Activated CD4-positive, alpha-beta memory T cell treated with anti-CD3 and anti-CD28 coated beads, Interleukin-2, amount 10 ng/mL, durations not matched to agents 7 days and 5 days (primary cell): ENCODE measurements at regions of chr19 and their contacts with region 1.

Region 1: DNA sequence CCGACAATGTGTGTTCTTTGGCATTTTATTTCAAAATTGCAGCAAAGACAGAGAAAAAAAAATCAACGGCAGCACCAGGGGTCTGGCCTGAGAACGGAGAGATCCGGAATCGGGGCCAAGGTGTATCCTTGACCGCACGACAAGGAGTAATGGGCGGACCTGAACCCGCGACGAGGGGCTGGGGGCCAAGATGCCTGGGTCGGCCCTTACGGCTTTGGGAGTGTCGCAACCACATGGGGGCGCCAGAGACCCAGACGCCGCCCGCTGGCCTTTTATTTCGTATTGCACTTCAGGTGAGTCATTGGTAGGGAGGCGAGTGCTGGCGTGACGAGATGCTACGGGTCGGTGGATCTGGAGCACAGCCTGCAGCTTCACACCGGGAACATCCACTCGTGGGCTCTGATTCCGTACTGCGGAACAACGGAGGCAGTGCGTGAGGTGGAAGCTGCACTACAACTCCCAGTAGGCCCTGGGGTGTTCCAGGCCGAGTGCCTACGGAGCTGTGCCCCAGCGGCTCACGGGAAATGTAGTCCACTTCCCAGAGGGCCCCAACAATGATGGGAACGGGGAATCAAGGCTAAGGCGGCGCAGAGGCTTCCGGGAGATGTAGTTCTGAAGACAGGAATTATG is 15.7 kb downstream of the BCAT2 start:
- DNase-seq: peak; percentile 89
- H3K4me3 Mint-ChIP-seq: peak overlapping the region; percentile 90
- H3K27ac Mint-ChIP-seq: peak overlapping the region; percentile 80
- H3K4me1 Mint-ChIP-seq: peaks cover 8% of the 10 kb centered on the region
- H3K27me3 Mint-ChIP-seq: no peaks in the 10 kb centered on the region

Region 2: DNA sequence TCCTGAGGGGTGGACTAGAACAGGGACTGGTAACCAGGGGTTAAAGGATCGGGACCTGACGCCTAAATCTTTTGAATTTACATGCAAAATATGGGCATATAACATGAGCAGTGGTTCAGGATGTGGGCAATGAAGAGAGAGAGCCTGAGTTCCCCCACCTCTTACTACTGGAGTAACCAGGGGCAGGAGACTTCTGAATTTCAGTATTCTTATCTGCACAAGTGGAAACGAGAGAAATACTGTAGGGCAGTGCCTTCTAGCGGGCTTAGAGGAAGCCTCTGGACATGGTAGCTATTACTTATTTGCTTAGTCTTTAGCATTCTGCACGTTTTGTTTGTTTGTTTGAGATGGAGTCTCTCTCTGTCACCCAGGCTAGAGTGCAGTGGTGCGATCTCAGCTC is 10.6 kb before region 1 on chr19:
- CTCF ChIA-PET with region 1: interaction called, 13 read pairs
- POLR2A ChIA-PET with region 1: interaction called, 4 read pairs
- DNase-seq: no peak
- H3K4me3 Mint-ChIP-seq: no peak overlapping the region
- H3K27ac Mint-ChIP-seq: no peak overlapping the region
- H3K4me1 Mint-ChIP-seq: peaks cover 3% of the 10 kb centered on the region
- H3K27me3 Mint-ChIP-seq: peaks cover 14% of the 10 kb centered on the region

Region 3: GRCh38 chr19:48812094-48812929 is 17.1 kb after region 1 on chr19:
- CTCF ChIA-PET with region 1: interaction called, 34 read pairs
- POLR2A ChIA-PET with region 1: interaction called, 22 read pairs
- DNase-seq: peak; percentile 71
- H3K4me3 Mint-ChIP-seq: peak overlapping the region; percentile 81
- H3K27ac Mint-ChIP-seq: peak overlapping the region; percentile 68
- H3K4me1 Mint-ChIP-seq: peaks cover 36% of the 10 kb centered on the region
- H3K27me3 Mint-ChIP-seq: no peaks in the 10 kb centered on the region

Region 4: GRCh38 chr19:48835734-48836088 is 40.5 kb after region 1 on chr19:
- CTCF ChIA-PET with region 1: interaction called, 109 read pairs
- POLR2A ChIA-PET with region 1: interaction called, 5 read pairs
- DNase-seq: peak; percentile 94
- H3K4me3 Mint-ChIP-seq: peak overlapping the region; percentile 65
- H3K27ac Mint-ChIP-seq: peak overlapping the region; percentile 41
- H3K4me1 Mint-ChIP-seq: peaks cover 17% of the 10 kb centered on the region
- H3K27me3 Mint-ChIP-seq: peaks cover 4% of the 10 kb centered on the region

Region 5: GRCh38 chr19:48970923-48971395 is 175.8 kb after region 1 on chr19:
- CTCF ChIA-PET with region 1: interaction called, 29 read pairs
- POLR2A ChIA-PET with region 1: interaction called, 8 read pairs
- DNase-seq: peak; percentile 81
- H3K4me3 Mint-ChIP-seq: no peak overlapping the region
- H3K27ac Mint-ChIP-seq: no peak overlapping the region
- H3K4me1 Mint-ChIP-seq: peaks cover 27% of the 10 kb centered on the region
- H3K27me3 Mint-ChIP-seq: no peaks in the 10 kb centered on the region